PC-9 (cell line): ENCODE measurements at regions of chr12 and their contacts with region 1.

Region 1: GRCh38 chr12:11719678-11720099 is 70.2 kb downstream of the ETV6 start:
- DNase-seq: no peak
- H3K4me3 ChIP-seq: no peak overlapping the region
- H3K27ac ChIP-seq: no peak overlapping the region
- H3K4me1 ChIP-seq: no peaks in the 10 kb centered on the region
- H3K27me3 ChIP-seq: no peaks in the 10 kb centered on the region
- CTCF ChIP-seq: no peak

Region 2: DNA sequence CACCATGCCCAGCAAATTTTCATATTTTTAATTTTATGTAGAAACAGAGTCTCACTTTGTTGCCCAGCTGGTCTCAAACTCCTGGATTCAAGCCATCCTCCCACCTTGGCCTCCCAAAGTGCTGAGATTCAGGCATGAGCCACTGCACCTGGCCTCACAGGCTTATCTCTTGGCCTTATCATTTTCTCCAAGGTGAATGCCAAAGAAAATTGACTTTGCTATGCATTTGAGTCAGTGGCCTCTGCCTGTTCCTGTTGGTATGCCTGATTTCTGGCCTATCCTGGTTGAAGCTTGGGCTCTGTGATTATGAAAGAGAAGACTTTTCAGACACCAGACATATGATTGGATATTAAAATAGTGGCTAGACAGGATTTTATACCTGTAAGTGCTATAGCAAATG is 596.1 kb after region 1 on chr12:
- CTCF ChIA-PET with region 1: interaction called, 22 read pairs
- POLR2A ChIA-PET with region 1: no interaction called
- intact Hi-C with region 1: no loop called
- DNase-seq: no peak
- H3K4me3 ChIP-seq: no peak overlapping the region
- H3K27ac ChIP-seq: no peak overlapping the region
- H3K4me1 ChIP-seq: no peaks in the 10 kb centered on the region
- H3K27me3 ChIP-seq: no peaks in the 10 kb centered on the region
- CTCF ChIP-seq: no peak